Left cardiac atrium (tissue), 4 donors: ENCODE measurements at regions of chr5 and their contacts with region 1.

Region 1: GRCh38 chr5:45696206-45696836 is at the start of gene HCN1:
- DNase-seq: peak; percentile 83
- ATAC-seq: peak; percentile 98
- total RNA-seq, gene HCN1: 5.6 to 8.0 TPM

Region 2: GRCh38 chr5:44952376-44952775 is 743.9 kb before region 1 on chr5:
- intact Hi-C with region 1: loop called in 1 of 2 experiments (anchors 5 kb)
- DNase-seq: no peak
- ATAC-seq: no peak